ENCODE measurements at regions of chr2 and their contacts with region 1.

Region 1: DNA sequence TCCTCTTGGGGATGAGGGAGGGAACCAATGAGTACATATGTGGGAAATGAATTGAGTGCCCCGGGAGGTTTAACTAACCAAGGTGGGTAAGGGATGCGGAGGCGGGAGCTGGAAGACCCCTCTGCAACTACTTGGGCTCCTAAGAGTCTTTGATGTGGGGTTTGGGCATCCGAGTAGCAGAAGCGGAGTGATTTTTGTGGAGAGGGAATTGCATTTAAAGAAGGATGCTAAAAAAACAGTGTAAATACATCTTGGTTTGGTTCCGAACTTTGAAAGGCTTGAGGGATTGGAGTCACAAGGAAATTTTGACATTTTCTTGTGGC is 215.7 kb downstream of the MCFD2 start:
- DNase-seq: no peak
- ATAC-seq: no peak
- H3K4me3 ChIP-seq: peak overlapping the region; percentile 99
- H3K27ac ChIP-seq: no peak overlapping the region
- H3K4me1 ChIP-seq: peaks cover 8% of the 10 kb centered on the region; the same call in 1 of the 2 replicates
- H3K27me3 ChIP-seq: no peaks in the 10 kb centered on the region
- CTCF ChIP-seq: no peak
- EP300 ChIP-seq: no peak
- POLR2A ChIP-seq: no peak
- RAD21 ChIP-seq: no peak

Region 2: GRCh38 chr2:46719487-46719886 is 19.6 kb after region 1 on chr2:
- CTCF ChIA-PET with region 1: no interaction called
- POLR2A ChIA-PET with region 1: interaction called, 19 read pairs
- RAD21 ChIA-PET with region 1: no interaction called
- SMC1A ChIA-PET with region 1: interaction called, 4 read pairs
- in situ Hi-C with region 1: no loop called
- intact Hi-C with region 1: no loop called
- DNase-seq: no peak
- ATAC-seq: peak; percentile 67
- H3K4me3 ChIP-seq: no peak overlapping the region
- H3K27ac ChIP-seq: no peak overlapping the region
- H3K4me1 ChIP-seq: peaks cover 8% of the 10 kb centered on the region
- H3K27me3 ChIP-seq: no peaks in the 10 kb centered on the region
- CTCF ChIP-seq: no peak
- EP300 ChIP-seq: no peak
- POLR2A ChIP-seq: no peak
- RAD21 ChIP-seq: no peak

Region 3: GRCh38 chr2:46769809-46770208 is 69.9 kb after region 1 on chr2:
- CTCF ChIA-PET with region 1: no interaction called
- POLR2A ChIA-PET with region 1: no interaction called
- RAD21 ChIA-PET with region 1: no interaction called
- SMC1A ChIA-PET with region 1: no interaction called
- in situ Hi-C with region 1: no loop called
- intact Hi-C with region 1: loop called (anchors 5 kb)
- DNase-seq: no peak
- ATAC-seq: peak; percentile 40; the same call in 2 of the 3 replicates
- H3K4me3 ChIP-seq: no peak overlapping the region
- H3K27ac ChIP-seq: no peak overlapping the region
- H3K4me1 ChIP-seq: no peaks in the 10 kb centered on the region
- H3K27me3 ChIP-seq: no peaks in the 10 kb centered on the region
- CTCF ChIP-seq: no peak
- EP300 ChIP-seq: no peak
- POLR2A ChIP-seq: no peak
- RAD21 ChIP-seq: peak; percentile 6; the same call in 1 of the 2 replicates

Region 4: GRCh38 chr2:46812361-46813024 is 112.6 kb after region 1 on chr2:
- CTCF ChIA-PET with region 1: no interaction called
- POLR2A ChIA-PET with region 1: no interaction called
- RAD21 ChIA-PET with region 1: no interaction called
- SMC1A ChIA-PET with region 1: no interaction called
- in situ Hi-C with region 1: no loop called
- intact Hi-C with region 1: no loop called
- DNase-seq: no peak
- ATAC-seq: no peak
- H3K4me3 ChIP-seq: no peak overlapping the region
- H3K27ac ChIP-seq: no peak overlapping the region
- H3K4me1 ChIP-seq: no peaks in the 10 kb centered on the region
- H3K27me3 ChIP-seq: peaks cover 0 to 2% of the 10 kb centered on the region in 2 experiments; a peak in 2 of 4 replicates
- CTCF ChIP-seq: no peak
- EP300 ChIP-seq: no peak
- POLR2A ChIP-seq: no peak
- RAD21 ChIP-seq: no peak